AG04449 (cell line): ENCODE measurements at regions of chr11 and their contacts with region 1.

Region 1: DNA sequence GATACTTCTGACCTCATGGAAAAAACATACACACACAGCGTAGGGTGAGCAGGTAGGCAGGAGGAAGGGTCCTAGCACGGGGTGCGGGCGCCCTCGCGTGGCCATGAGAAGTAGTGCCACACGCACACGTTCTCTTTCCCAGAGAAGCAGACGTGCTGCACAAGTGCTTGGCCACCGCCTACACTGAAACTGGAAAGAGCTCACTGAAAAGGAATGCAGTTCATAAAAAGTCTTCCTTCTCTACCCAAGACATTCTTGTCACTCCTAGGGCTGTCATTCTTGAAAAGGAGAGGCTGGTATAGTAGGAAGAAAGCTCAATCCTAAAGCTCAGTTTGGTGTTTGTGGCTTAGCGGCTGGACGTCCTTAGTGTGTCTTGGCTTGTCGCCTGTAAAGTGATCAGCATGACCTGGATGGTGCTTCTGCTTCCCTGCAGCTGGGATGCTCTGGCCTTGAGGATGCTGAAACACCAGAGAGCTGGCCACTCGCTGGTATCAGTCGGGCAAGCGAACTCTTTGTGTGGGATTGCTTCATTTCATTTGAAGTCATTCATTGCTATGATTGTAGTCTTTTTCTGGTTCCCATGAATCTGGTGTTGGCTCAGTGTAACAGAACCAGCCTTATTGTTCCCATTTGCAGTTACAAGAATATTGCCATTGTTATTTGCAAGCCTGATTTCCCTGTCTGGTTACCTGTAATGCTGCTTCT is 303.8 kb downstream of the NTM start:
- DNase-seq: peak; percentile 64
- H3K4me3 ChIP-seq: no peak overlapping the region
- CTCF ChIP-seq: peak; percentile 98

Region 2: GRCh38 chr11:131070365-131070764 is 603.8 kb before region 1 on chr11:
- CTCF ChIA-PET with region 1: interaction called, 79 read pairs
- POLR2A ChIA-PET with region 1: interaction called, 3 read pairs
- DNase-seq: no peak
- H3K4me3 ChIP-seq: no peak overlapping the region
- CTCF ChIP-seq: no peak

Region 3: DNA sequence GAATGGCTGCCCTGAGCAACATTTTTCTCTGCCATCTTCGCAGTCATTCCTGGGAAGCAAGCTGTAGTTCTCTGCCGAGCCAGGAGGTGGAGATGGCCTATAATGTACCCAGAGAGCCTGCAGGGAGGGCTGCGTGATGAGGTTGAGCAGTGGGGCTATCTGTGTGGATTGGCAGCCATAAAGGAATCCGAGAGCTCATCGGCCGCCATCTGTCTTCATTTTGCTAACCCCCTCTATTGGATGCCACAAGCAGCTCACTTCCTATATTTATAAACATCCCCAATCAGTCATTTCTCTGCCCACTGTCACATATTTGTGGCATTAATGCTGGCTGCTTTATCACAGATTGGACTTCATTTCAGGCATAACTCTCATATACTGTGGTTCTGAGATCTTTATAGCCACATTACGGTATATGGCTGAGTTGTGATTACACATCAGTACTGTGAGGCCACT is 94.2 kb before region 1 on chr11:
- CTCF ChIA-PET with region 1: interaction called, 226 read pairs
- POLR2A ChIA-PET with region 1: interaction called, 18 read pairs
- DNase-seq: peak; percentile 82
- H3K4me3 ChIP-seq: no peak overlapping the region
- CTCF ChIP-seq: peak; percentile 86

Region 4: GRCh38 chr11:131609337-131609736 is 64.9 kb before region 1 on chr11:
- CTCF ChIA-PET with region 1: interaction called, 13 read pairs
- POLR2A ChIA-PET with region 1: interaction called, 4 read pairs
- DNase-seq: peak; percentile 69
- H3K4me3 ChIP-seq: no peak overlapping the region
- CTCF ChIP-seq: no peak

Region 5: DNA sequence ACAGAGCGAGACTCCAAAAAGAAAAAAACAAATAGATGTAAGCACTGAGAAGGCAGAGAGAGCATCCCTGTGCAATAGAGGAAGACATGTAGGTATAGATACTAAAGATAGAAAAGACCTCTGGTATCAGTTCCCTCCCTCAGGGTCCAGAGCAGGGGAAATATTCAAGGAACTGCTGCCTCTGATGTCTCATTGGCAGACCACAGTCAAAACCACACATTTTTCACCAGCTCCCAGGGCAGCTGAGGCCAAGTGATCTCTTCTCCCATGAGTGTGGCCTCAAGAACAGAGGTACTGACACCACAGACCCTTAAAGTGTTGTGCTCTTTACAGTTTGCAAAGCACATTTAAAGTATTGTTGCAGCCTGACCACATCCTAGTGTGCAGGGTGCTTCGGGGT is 15.3 kb before region 1 on chr11:
- CTCF ChIA-PET with region 1: interaction called, 72 read pairs
- POLR2A ChIA-PET with region 1: no interaction called
- DNase-seq: no peak
- H3K4me3 ChIP-seq: no peak overlapping the region
- CTCF ChIP-seq: no peak